ENCODE measurements at regions of chr1 and their contacts with region 1.

Region 1: GRCh38 chr1:94805912-94806311 is 14.2 kb upstream of the SLC44A3 start:
- DNase-seq: peak; percentile 71
- H3K4me3 ChIP-seq: no peak overlapping the region
- H3K27ac ChIP-seq: no peak overlapping the region
- H3K4me1 ChIP-seq: peaks cover 7% of the 10 kb centered on the region
- H3K27me3 ChIP-seq: no peaks in the 10 kb centered on the region
- CTCF ChIP-seq: peak; percentile 98

Region 2: GRCh38 chr1:94522304-94522703 is 283.6 kb before region 1 on chr1:
- intact Hi-C with region 1: loop called (anchors 5 kb)
- DNase-seq: peak; percentile 36
- H3K4me3 ChIP-seq: no peak overlapping the region
- H3K27ac ChIP-seq: no peak overlapping the region
- H3K4me1 ChIP-seq: no peaks in the 10 kb centered on the region
- H3K27me3 ChIP-seq: no peaks in the 10 kb centered on the region
- CTCF ChIP-seq: peak; percentile 25

Region 3: GRCh38 chr1:94538191-94538827 is 267.6 kb before region 1 on chr1:
- intact Hi-C with region 1: no loop called
- DNase-seq: no peak
- H3K4me3 ChIP-seq: no peak overlapping the region
- H3K27ac ChIP-seq: no peak overlapping the region
- H3K4me1 ChIP-seq: no peaks in the 10 kb centered on the region
- H3K27me3 ChIP-seq: no peaks in the 10 kb centered on the region
- CTCF ChIP-seq: no peak

Region 4: DNA sequence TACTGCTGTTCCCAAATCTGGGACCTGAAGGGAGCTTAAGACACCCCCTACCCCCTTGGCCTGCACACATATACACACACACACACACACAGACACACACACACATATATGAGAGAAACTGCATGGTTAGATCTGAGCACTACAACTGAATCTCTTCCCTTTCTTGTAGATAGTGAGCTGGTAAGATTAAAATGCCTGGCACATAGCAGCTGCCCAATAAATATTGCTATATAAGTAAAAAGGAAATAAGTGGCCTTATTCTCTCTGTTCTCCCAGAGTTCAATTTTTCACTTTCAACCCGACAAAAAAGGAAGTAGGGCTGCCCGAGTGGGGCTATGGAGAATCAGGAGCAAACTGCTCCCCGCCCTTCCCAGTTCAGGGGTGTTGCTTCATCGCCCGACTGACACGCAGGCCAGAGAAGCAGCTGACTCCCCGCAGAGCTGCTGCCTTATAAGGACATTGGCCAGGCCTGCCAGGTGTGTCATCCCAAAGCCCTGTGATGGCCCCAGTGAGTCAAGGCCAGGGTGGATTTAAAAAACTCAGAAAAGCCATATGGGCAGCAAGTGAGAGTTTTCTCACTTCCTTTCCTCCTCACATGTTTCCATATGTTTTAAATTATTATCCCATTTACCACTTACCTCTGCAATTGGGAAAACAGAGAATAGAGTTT is 92.3 kb before region 1 on chr1:
- intact Hi-C with region 1: no loop called
- DNase-seq: peak; percentile 83
- H3K4me3 ChIP-seq: no peak overlapping the region
- H3K27ac ChIP-seq: peak overlapping the region; percentile 48
- H3K4me1 ChIP-seq: no peaks in the 10 kb centered on the region
- H3K27me3 ChIP-seq: no peaks in the 10 kb centered on the region
- CTCF ChIP-seq: no peak

Region 5: GRCh38 chr1:94863919-94864318 is 58.0 kb after region 1 on chr1:
- intact Hi-C with region 1: no loop called
- DNase-seq: peak; percentile 29
- H3K4me3 ChIP-seq: no peak overlapping the region
- H3K27ac ChIP-seq: peak overlapping the region; percentile 70
- H3K4me1 ChIP-seq: no peaks in the 10 kb centered on the region
- H3K27me3 ChIP-seq: no peaks in the 10 kb centered on the region
- CTCF ChIP-seq: no peak

Region 6: DNA sequence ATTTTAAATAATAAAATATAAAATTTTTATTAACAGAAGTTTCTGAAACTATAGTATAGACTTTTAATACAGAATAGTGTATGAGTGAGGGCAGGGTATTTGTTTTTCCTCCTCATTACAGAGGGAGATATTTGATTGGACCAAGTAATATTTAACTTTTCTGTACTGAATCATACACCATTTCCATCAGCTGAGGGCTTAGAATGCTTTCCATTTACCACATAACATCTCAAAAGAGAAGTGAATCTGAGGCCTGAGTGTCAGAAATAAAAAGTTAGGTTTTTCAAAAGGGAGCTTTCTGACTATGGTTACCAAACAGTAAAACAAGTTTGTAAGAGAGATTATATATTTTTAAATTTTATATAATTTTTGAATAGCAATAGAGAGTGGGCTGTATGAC is 340.7 kb after region 1 on chr1:
- intact Hi-C with region 1: no loop called
- DNase-seq: no peak
- H3K4me3 ChIP-seq: no peak overlapping the region
- H3K27ac ChIP-seq: no peak overlapping the region
- H3K4me1 ChIP-seq: no peaks in the 10 kb centered on the region
- H3K27me3 ChIP-seq: no peaks in the 10 kb centered on the region
- CTCF ChIP-seq: no peak